GM13976 (cell line): ENCODE measurements at regions of chr6 and their contacts with region 1.

Region 1: GRCh38 chr6:24520929-24521546 is 26.3 kb downstream of the ALDH5A1 start:
- DNase-seq: peak; percentile 52
- CTCF ChIP-seq: peak; percentile 83

Region 2: GRCh38 chr6:23415819-23416427 is 1105.1 kb before region 1 on chr6:
- in situ Hi-C with region 1: no loop called
- DNase-seq: no peak
- CTCF ChIP-seq: no peak

Region 3: GRCh38 chr6:24283043-24283985 is 237.7 kb before region 1 on chr6:
- in situ Hi-C with region 1: loop called (anchors 25 kb)
- DNase-seq: peak; percentile 71
- CTCF ChIP-seq: peak; percentile 42